Ovary (tissue), 10 donors: ENCODE measurements at regions of chr21 and their contacts with region 1.

Region 1: DNA sequence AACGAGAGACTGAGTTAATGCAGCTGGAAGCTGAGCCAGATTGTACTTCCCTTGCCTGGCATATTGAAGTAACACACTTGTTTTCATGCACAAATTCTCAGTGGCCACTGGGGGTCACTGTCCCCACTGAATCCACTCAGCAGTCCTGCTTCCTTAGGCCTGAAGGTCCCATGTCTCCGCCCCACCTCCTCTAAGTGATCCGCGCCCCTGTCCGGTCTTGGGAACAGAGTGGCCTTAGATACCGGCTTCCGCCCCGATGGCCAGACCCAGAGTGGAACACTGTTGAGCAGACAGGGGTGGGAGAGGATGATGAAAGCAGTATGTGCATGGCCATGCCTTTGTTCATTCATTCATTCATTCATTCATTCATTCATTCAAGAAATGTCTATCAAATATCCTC is 34.8 kb downstream of the CHAF1B start:
- DNase-seq: peak; percentile 76 to 86 (median 80)
- H3K4me3 ChIP-seq: no peak overlapping the region
- H3K27ac ChIP-seq: no peak overlapping the region
- H3K4me1 ChIP-seq: no peaks in the 10 kb centered on the region
- H3K27me3 ChIP-seq: no peaks in the 10 kb centered on the region
- CTCF ChIP-seq: peak; percentile 66 to 72 (median 70)
- EP300 ChIP-seq: no peak
- POLR2A ChIP-seq: no peak

Region 2: GRCh38 chr21:34526618-34527290 is 1893.2 kb before region 1 on chr21:
- intact Hi-C with region 1: no loop called
- DNase-seq: peak; percentile 45 to 78 (median 62)
- H3K4me3 ChIP-seq: peak overlapping the region; percentile 43
- H3K27ac ChIP-seq: peak overlapping the region; percentile 31 to 83
- H3K4me1 ChIP-seq: peaks cover 3% of the 10 kb centered on the region
- H3K27me3 ChIP-seq: no peaks in the 10 kb centered on the region
- CTCF ChIP-seq: no peak
- EP300 ChIP-seq: peak; percentile 88
- POLR2A ChIP-seq: no peak

Region 3: DNA sequence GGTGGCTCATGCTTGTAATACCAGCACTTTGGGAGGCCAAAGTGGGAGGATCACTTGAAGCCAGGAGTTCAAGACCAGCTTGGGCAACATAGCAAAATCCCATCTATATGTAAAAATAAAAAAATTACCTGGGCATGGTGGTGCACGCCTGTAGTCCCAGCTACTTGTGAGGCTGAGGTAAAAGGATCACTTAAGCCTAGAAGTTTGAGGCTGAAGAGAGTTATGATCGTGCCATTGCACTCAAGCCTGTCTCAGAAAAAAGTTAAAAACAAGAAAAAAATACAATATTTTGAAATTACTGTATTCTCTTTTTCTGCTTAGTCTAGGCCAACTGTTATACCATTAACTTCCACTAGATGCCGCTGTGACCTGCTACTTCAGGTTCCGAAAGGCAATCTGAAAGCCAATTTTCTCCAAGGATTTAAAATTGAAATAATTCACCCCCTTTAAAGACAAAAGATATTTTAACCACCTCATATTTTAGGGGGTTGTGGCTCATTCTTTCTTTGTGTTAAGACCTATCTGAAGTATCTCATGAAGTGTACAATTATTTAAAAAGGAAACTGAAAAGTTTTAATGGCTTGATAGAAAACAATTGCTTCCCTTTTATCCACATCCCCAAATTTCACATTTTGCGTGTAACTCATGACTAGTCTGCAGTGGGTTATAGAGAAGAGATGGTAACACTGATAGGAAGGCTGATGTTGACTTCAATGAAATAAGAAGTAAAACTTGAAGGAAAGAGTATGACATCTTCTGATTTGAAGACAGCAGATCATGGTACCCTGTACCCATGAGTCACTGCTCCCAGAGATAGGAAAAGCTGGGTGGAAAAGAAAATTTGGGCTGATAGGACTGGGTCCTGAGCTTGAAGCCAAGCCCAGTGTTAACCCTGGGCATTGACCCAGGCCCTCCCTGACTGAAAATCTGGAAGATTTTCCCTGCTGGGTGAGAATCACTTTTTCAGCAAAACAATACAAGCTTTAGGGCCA is 84.4 kb after region 1 on chr21:
- intact Hi-C with region 1: loop called in 1 of 4 experiments (anchors 5 kb)
- DNase-seq: peak in 2 of 5 donors; percentile 29 to 47
- H3K4me3 ChIP-seq: no peak overlapping the region
- H3K27ac ChIP-seq: no peak overlapping the region
- H3K4me1 ChIP-seq: no peaks in the 10 kb centered on the region
- H3K27me3 ChIP-seq: no peaks in the 10 kb centered on the region
- CTCF ChIP-seq: peak; percentile 68 to 89 (median 82)
- EP300 ChIP-seq: no peak
- POLR2A ChIP-seq: no peak

Region 4: DNA sequence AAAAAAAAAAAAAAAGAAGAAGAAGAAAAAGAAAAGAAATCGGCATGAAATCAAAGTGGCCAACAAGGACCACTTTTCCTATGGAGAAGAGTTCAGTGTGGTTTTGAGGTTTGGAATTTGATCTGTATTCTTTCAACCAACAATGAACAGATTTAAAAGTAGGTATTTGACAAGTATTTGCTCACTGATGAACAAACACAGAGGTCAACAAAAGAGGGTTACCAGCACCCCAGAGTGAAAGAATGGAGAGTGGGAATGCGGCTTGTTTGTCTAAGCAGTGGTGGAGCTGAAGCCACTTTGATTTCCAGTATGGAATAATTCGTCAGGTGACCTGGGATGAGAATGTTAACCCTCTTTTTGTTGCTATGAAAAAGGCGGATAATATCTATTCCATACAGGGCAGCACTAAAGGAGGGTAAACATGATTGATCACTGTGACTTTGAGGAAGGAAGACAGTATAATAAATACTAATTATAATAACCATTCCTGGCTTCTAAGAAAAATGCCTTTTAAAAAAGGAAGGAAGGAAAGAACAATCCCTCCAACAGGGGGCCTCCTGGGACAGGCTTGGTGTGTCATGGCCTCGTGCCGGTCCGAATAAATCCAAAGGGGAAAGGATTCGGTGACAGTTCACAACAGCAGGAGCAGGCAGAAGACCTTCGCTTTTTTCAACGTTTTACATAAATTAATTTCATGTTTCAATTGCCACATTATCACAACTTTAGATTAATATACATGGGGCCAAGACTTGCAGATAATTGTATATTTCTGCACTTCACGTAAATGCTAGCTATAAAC is 241.7 kb after region 1 on chr21:
- intact Hi-C with region 1: loop called in 1 of 4 experiments (anchors 5 kb)
- DNase-seq: no peak
- H3K4me3 ChIP-seq: no peak overlapping the region
- H3K27ac ChIP-seq: no peak overlapping the region
- H3K4me1 ChIP-seq: no peaks in the 10 kb centered on the region
- H3K27me3 ChIP-seq: no peaks in the 10 kb centered on the region
- CTCF ChIP-seq: no peak
- EP300 ChIP-seq: no peak
- POLR2A ChIP-seq: no peak

Region 5: DNA sequence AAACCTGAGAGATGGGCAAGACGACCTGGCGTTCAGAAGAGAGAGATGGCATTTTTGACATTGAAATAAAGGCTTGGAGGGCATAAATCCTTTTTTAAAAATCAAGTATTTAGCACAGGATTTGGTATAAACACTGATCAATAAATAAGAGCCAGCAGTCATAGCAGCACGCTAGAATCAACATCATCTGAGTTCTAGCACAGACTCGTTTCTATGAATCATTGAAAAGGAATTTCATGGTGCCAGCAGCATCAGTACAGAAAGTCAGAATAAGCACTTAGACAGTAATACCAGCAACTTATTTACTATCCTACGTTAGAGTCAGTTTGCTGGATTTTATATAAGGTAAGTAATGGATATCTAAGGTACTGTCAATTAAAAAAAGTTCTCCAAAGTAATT is 427.2 kb after region 1 on chr21:
- intact Hi-C with region 1: no loop called
- DNase-seq: no peak
- H3K4me3 ChIP-seq: no peak overlapping the region
- H3K27ac ChIP-seq: no peak overlapping the region
- H3K4me1 ChIP-seq: peaks cover 4% of the 10 kb centered on the region
- H3K27me3 ChIP-seq: no peaks in the 10 kb centered on the region
- CTCF ChIP-seq: no peak
- EP300 ChIP-seq: no peak
- POLR2A ChIP-seq: no peak